MCF 10A (cell line): ENCODE measurements at regions of chr7 and their contacts with region 1.

Region 1: DNA sequence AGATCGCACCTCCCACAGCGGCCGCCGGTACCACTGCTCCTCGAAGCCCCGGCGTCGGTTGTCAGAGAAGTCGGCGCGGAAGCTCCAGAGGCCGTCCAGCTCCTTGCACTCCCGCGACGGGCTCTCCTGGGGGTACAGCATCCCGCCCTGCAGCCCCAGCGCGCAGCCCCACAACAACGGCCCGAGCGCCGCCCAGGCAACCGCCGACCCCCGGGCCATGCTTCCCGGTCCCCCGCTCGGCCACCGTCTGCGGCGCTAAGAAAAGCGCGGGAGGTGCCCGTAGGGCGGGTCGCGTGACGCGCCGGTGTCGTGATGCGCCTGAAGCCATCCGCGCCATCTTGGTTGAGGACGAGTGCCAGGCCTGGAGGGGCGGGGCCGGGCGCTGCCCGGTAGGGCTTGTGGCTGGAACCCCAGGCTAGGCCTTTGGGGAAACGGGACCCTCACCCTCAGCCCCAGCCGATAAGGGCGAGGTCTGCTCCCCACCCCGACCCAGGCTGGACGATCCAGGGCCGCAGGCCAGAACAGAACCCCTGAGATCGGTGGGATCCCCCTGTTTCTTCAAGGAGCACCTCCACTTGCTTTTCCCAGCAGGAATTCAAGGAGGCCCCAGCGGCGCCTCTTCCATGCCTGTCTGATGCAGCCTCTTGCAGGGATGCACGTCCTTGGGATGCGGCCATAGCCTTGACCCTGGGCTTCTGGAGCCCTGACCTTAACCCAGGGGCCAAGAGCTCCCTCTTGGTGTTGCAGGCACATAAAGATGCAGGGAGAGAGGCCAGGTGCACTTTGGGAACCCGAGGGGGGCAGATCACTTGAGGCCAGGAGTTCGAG is at the start of gene GUSB:
- DNase-seq: peak; percentile 89
- H3K4me3 Mint-ChIP-seq: peak within 1 kb of the TSS; percentile 71
- H3K27ac Mint-ChIP-seq: peak within 1 kb of the TSS; percentile 51
- H3K4me1 Mint-ChIP-seq: peaks cover 5% of the 10 kb centered on the region
- H3K27me3 Mint-ChIP-seq: no peaks in the 10 kb centered on the region
- CTCF ChIP-seq: no peak
- total RNA-seq, gene GUSB: 35.0 and 36.9 TPM in 2 replicates

Region 2: DNA sequence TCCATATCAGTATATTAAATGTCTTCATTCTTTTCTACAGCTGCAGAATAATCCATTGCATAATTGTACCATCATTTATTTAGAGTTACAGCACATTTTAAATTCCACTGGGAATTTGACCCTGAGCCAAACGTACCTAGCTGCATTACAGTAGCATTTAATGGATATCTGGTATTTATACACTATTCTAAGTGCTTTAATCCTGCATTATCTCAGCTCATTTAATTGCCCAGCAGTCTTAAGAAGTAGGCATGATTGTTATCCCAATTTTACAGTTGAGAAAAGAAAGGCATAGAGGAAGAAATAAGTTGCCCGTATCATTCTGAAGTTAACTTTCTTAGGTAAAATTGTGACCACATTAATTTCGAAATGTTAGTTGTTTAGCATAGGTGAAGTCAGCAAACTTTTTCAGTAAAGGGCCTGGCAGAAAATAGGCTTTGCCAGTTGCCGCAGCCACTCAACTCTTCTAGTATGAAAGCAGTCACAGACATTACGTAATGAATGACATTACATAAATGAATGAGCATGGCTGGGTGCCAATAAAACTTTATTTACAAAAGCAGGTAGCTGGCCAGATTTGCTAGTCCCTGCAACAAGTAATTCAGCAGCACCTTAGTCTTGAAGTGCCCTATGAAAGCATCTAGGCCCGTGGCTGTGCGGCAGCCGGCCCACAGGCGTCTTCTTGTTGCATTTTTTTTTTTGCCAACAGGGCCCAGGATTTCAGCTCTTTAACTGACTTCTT is 30.2 kb before region 1 on chr7:
- CTCF ChIA-PET with region 1: no interaction called
- POLR2A ChIA-PET with region 1: interaction called, 10 read pairs
- intact Hi-C with region 1: no loop called
- DNase-seq: peak; percentile 82
- H3K4me3 Mint-ChIP-seq: no peak overlapping the region
- H3K27ac Mint-ChIP-seq: no peak overlapping the region
- H3K4me1 Mint-ChIP-seq: peaks cover 14% of the 10 kb centered on the region
- H3K27me3 Mint-ChIP-seq: no peaks in the 10 kb centered on the region
- CTCF ChIP-seq: no peak